Posterior vena cava (tissue), 2 donors: ENCODE measurements at regions of chr6 and their contacts with region 1.

Region 1: DNA sequence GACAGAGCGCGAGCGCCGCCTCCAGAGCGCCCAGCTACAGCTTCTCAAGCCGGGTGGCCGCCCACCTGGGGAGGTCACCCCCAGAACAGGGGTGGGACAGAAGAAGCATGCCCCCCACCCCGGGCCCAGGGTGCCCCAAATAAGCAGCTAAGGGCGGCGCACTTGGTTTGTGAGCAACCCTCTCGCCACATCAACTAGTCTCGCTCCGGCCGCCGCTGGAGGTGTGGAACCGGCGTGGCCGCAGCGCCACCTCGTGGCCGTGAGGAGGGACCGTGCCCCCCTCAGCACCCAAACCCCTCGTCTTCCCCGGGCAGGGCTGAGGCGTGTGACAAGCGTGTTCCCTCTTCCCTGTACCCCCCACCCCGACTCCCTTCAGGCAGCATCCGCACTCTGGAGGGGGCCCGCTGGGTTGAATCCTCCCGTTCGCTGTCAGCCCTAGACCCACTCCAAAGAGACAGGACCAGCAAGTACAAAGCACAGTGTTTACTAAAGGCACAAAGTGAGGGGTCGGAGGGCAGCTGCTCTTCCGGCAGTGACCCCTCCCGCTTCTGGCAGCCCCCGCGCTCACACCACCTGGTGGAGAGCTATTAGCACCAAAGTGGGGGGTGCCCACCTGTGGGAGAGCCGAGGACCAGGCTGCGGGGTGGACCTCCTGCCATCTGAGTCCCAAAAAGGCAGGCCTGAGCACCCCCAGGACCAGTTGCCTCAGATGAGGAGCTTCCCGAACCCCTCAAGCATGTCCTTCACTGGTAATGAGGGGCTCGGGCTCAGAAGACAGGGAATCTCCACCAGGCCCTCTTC is 45.4 kb downstream of the MDFI start:
- DNase-seq: peak; percentile 95

Region 2: GRCh38 chr6:41367700-41368099 is 316.0 kb before region 1 on chr6:
- intact Hi-C with region 1: loop called (anchors 2 to 5 kb)
- DNase-seq: no peak

Region 3: GRCh38 chr6:41602864-41603608 is 80.7 kb before region 1 on chr6:
- intact Hi-C with region 1: loop called (anchors 2 to 5 kb)
- DNase-seq: peak; percentile 91

Region 4: GRCh38 chr6:41920921-41921711 is 237.4 kb after region 1 on chr6 and contains the starts of genes BYSL and MED20:
- intact Hi-C with region 1: no loop called
- DNase-seq: peak; percentile 98
- total RNA-seq, gene BYSL: 12.7 to 16.8 TPM
- total RNA-seq, gene MED20: 11.9 to 17.8 TPM